ENCODE measurements at regions of chr7 and their contacts with region 1.

Region 1: GRCh38 chr7:105365541-105366534 is 22.9 kb downstream of the SRPK2 start:
- DNase-seq: no peak
- H3K4me3 ChIP-seq: no peak overlapping the region
- H3K27ac ChIP-seq: no peak overlapping the region
- H3K4me1 ChIP-seq: no peaks in the 10 kb centered on the region
- H3K27me3 ChIP-seq: no peaks in the 10 kb centered on the region
- CTCF ChIP-seq: no peak

Region 2: DNA sequence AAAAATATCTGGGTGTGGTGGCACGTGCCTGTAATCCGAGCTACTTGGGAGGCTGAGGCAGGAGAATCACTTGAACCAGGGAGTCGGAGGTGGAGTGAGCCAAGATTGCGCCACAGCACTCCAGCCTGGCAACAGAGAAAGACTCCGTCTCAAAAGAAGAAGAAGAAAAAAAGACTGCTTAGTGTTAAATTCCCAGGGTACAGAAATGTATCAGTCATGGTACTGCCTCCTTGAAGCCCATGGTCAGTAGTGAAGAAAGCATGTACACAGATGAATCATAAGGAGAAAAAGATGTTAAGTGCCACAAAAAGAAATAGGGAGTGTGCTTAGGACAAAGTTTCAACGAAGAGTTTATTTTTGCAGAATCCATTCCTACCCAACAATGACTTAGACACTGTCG is 414.3 kb before region 1 on chr7:
- CTCF ChIA-PET with region 1: no interaction called
- dilution Hi-C with region 1: no loop called
- in situ Hi-C with region 1: no loop called
- intact Hi-C with region 1: no loop called
- DNase-seq: no peak
- H3K4me3 ChIP-seq: no peak overlapping the region
- H3K27ac ChIP-seq: no peak overlapping the region
- H3K4me1 ChIP-seq: peaks cover 6% of the 10 kb centered on the region
- H3K27me3 ChIP-seq: no peaks in the 10 kb centered on the region
- CTCF ChIP-seq: no peak

Region 3: DNA sequence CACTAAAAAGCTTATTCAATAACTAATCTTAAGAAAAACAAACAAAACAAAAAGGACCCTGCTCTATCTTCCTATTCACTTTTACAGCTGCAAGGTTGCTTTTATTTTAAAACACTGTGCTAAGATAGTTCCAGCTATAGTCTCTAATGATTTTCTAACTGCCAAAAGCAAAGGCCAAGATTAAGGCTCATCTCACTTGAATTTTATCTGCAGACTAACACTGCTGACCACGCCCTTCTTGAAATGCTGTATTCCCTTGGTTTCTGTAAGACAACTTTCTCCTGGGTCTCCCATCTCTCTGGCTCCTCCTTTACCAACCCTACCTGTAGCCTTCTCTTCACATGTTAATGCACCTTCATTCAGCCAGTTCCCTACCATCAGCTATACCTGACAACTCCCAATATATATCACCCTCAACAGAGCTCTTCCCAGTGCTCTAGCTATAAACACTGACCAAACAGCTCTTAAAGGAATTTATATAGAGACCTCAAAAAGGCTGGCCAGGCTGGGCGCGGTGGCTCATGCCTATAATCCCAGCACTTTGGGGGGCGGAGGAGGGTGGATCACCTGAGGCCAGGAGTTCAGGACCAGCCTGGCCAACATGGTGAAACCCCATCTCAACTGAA is 11.2 kb after region 1 on chr7:
- CTCF ChIA-PET with region 1: interaction called, 15 read pairs
- dilution Hi-C with region 1: no loop called
- in situ Hi-C with region 1: no loop called
- intact Hi-C with region 1: no loop called
- DNase-seq: no peak
- H3K4me3 ChIP-seq: no peak overlapping the region
- H3K27ac ChIP-seq: no peak overlapping the region
- H3K4me1 ChIP-seq: no peaks in the 10 kb centered on the region
- H3K27me3 ChIP-seq: no peaks in the 10 kb centered on the region
- CTCF ChIP-seq: no peak

Measured in mammary epithelial cell (primary cell).